GM10248 (cell line): ENCODE measurements at regions of chr3 and their contacts with region 1.

Region 1: DNA sequence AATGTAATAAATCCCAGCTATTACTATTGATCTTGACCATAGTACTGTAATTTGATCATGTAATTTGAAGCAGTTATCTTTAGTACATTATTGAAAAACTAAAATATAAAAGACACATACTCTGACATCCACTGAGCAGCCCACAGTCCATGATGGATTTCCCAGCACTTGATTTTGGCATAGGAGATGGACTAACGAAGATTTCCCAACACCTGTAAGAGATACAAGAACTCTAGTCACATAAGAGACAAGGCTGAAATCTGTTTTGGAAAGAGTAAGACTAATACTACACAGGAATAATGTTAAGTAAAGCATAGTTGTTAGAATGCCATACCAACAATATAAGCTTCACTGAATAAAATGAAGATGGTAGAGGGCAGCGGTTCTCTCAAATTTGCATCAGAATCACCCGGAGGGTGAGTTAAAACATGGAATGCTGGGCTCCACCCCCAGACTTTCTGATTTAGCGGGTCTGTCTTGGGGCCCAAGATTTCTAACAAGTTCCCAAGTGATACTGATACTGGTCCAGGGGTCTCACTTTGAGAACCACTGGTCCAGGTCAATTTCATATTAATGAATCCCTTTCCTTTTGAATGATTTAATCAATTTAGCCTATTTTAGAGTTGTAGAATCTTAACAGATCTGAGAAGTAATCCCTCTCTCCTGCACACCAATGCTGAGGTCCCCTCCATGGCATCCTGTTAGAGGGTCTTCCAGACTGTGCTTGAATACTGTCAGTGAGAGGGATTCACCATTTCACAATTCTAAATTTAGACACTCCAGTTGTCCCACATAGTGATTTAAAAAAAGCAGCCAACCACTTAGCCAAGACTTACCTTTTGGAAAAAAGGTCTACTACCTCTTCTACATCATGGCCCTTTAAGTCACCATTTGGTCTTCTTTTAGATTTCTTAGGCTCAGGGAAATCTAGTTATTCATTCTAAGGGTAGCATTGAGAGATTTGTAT is 11.5 kb downstream of the RABL3 start:
- DNase-seq: no peak
- CTCF ChIP-seq: no peak

Region 2: GRCh38 chr3:120742198-120742849 is 11.5 kb after region 1 on chr3 and contains the starts of genes GTF2E1 and RABL3:
- CTCF ChIA-PET with region 1: interaction called, 17 read pairs
- POLR2A ChIA-PET with region 1: no interaction called
- DNase-seq: peak; percentile 97
- CTCF ChIP-seq: no peak